Activated CD8-positive, alpha-beta T cell treated with anti-CD3 and anti-CD28 coated beads for 36 hours (primary cell): ENCODE measurements at regions of chr13 and their contacts with region 1.

Region 1: DNA sequence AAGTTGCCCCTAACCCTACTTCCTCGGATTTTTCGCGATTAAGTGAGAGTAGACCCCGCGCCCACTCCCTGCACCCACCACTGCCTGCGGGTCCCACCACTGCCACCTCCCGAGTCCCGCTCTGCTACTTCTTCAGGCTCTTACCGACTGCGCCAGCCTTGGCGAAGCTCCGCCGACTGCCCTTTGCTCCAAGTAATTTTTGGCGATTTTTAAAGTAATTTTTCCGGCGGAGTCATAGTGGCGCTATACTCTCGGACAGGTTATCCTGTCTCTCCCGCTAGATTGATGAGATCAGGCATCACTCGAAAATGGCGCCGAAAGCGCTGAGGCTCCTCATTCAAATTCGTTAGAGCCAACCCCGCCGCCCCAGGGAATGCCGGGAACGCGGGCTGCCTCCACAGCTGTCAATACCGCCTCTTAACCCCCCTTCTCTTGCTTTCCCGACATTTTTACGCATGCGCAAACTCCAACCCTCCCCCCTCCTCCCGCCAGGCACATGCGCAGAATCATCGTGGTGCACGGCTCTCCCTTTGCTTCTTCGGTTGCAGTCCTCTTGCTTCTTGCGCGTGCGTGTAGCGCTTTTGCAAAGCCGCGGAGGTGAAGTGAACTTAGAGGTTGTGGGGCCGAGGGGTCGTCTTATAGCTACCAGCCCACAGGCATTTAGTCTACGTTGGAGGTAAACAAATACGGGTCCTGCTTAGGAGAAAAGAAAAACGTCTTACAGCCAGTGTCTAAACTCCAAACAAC is 66.6 kb downstream of the KCNRG start:
- DNase-seq: peak; percentile 99
- ATAC-seq: peak; percentile 81
- H3K4me3 Mint-ChIP-seq: peak overlapping the region; percentile 93
- H3K27ac Mint-ChIP-seq: peak overlapping the region; percentile 98
- H3K4me1 Mint-ChIP-seq: peaks cover 28% of the 10 kb centered on the region
- H3K27me3 Mint-ChIP-seq: peaks cover 5% of the 10 kb centered on the region
- CTCF ChIP-seq: no peak

Region 2: GRCh38 chr13:49996951-49997895 is 84.6 kb before region 1 on chr13 and contains the start of gene TRIM13:
- CTCF ChIA-PET with region 1: interaction called, 29 read pairs
- POLR2A ChIA-PET with region 1: interaction called, 32 read pairs
- intact Hi-C with region 1: no loop called
- DNase-seq: peak; percentile 91
- ATAC-seq: peak; percentile 86
- H3K4me3 Mint-ChIP-seq: peak within 1 kb of the TSS; percentile 86
- H3K27ac Mint-ChIP-seq: peak within 1 kb of the TSS; percentile 91
- H3K4me1 Mint-ChIP-seq: peaks cover 32% of the 10 kb centered on the region
- H3K27me3 Mint-ChIP-seq: no peaks in the 10 kb centered on the region
- CTCF ChIP-seq: peak; percentile 80
- total RNA-seq, gene TRIM13: 12.5 to 13.4 TPM

Region 3: GRCh38 chr13:50116430-50116973 is 34.6 kb after region 1 on chr13:
- CTCF ChIA-PET with region 1: interaction called, 13 read pairs
- POLR2A ChIA-PET with region 1: interaction called, 7 read pairs
- intact Hi-C with region 1: no loop called
- DNase-seq: no peak
- ATAC-seq: no peak
- H3K4me3 Mint-ChIP-seq: no peak overlapping the region
- H3K27ac Mint-ChIP-seq: no peak overlapping the region
- H3K4me1 Mint-ChIP-seq: peaks cover 10% of the 10 kb centered on the region
- H3K27me3 Mint-ChIP-seq: no peaks in the 10 kb centered on the region
- CTCF ChIP-seq: no peak

Region 4: DNA sequence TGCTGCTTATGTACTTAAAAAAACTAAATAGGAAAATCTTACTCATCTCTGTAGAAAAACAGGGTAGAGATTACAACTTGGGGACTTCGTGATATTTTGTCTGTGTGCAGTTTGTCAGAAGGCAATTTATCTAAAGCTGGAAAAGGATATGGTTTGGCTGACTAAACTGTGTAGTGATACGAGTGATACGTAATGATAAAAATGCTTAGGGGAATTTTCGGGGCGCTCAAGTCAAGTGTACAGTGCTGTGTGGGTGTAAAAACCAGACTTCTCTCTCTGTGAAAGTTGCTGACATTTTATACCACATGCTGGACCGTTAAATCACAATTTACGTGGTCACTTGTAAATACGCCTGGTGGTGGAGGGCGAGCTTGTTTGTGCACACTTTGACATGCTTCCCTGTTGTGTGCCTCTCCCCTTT is 155.1 kb after region 1 on chr13:
- CTCF ChIA-PET with region 1: interaction called, 4 read pairs
- POLR2A ChIA-PET with region 1: interaction called, 6 read pairs
- intact Hi-C with region 1: loop called (anchors 5 kb)
- DNase-seq: peak; percentile 72
- ATAC-seq: peak; percentile 83
- H3K4me3 Mint-ChIP-seq: peak overlapping the region; percentile 20
- H3K27ac Mint-ChIP-seq: peak overlapping the region; percentile 65
- H3K4me1 Mint-ChIP-seq: peaks cover 45% of the 10 kb centered on the region
- H3K27me3 Mint-ChIP-seq: peaks cover 15% of the 10 kb centered on the region
- CTCF ChIP-seq: no peak

Region 5: DNA sequence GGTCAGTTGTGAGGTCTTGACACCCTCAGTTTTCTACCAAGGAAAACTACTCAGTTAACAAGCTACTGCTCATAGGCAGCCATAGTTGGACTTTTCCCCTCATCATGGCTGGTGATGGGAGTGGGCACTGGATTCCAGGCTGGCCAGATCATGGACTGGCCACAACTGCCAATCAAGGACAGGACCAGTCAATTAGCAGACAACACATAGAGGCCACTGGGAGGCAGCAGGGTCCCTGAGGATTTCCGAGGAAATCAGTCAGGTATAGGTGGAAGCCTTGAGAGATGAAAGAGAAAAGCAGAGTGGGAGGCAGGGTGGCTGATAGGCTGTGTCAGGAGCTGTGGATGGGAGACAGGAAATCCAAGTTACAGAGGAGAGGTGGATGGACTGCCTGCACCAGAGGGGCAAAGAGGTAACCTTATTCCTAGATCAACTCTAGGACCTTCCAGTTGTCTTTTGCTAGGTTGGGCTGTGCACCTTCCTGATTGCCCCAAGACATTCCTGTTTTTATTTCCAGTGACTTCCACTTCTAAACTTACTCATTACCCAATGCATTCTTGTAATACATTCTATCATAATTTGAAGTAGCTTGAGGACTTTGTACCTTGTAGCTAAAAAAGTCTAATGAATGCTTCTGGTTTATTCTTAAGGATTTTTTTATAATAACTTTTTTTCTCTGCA is 295.2 kb after region 1 on chr13:
- CTCF ChIA-PET with region 1: no interaction called
- POLR2A ChIA-PET with region 1: no interaction called
- intact Hi-C with region 1: no loop called
- DNase-seq: no peak
- ATAC-seq: no peak
- H3K4me3 Mint-ChIP-seq: no peak overlapping the region
- H3K27ac Mint-ChIP-seq: no peak overlapping the region
- H3K4me1 Mint-ChIP-seq: peaks cover 5% of the 10 kb centered on the region
- H3K27me3 Mint-ChIP-seq: peaks cover 9% of the 10 kb centered on the region
- CTCF ChIP-seq: no peak